Activated B cell treated with CpG ODN at 0.5 μM for 24 hours (primary cell): ENCODE measurements at regions of chr2 and their contacts with region 1.

Region 1: DNA sequence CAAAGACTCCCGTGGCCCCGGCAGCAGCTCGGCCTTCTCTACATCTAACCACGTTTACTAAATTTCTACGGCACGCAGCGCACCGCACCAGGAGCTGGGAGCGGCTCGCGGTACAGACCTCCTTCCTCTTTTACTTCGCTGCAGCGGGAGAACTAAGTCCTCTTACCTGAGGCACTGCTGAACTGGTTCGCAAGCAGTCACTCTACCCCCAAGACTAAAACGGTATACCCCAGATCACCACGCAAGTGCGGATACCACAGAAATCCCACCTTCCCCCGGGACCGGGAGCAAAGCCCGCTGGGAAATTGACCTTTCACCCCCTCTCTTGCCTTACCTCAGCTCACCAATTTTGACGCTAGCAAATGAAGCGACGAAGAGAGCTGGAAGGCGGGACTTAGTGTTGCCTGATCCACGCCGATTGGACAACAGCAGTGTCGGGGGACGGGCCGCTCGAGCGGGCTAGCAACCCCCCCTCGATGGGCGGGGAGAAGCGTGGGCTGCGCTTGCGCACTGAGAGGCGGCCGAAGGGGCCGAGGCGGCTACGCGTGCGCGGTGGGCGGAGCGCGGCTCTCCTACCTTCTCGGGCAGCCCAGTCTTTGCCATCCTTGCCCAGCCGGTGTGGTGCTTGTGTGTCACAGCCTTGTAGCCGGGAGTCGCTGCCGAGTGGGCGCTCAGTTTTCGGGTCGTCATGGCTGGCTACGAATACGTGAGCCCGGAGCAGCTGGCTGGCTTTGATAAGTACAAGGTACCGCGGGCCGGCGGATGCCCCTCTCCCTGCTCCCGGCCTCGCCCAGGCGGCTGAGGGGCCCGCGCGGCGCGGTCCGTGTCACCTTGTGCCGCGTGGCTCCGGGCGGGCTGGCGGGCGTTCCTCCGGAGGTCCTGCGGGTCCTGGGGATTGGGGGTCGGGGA is at the start of gene SELENOI:
- DNase-seq: peak; percentile 99
- ATAC-seq: peak; percentile 96
- H3K4me3 Mint-ChIP-seq: peak within 1 kb of the TSS; percentile 95
- H3K27ac Mint-ChIP-seq: peak within 1 kb of the TSS; percentile 95
- H3K4me1 Mint-ChIP-seq: peaks cover 42% of the 10 kb centered on the region
- H3K27me3 Mint-ChIP-seq: no peaks in the 10 kb centered on the region
- CTCF ChIP-seq: no peak
- total RNA-seq, gene SELENOI: 20.2 and 21.1 TPM in 2 replicates

Region 2: DNA sequence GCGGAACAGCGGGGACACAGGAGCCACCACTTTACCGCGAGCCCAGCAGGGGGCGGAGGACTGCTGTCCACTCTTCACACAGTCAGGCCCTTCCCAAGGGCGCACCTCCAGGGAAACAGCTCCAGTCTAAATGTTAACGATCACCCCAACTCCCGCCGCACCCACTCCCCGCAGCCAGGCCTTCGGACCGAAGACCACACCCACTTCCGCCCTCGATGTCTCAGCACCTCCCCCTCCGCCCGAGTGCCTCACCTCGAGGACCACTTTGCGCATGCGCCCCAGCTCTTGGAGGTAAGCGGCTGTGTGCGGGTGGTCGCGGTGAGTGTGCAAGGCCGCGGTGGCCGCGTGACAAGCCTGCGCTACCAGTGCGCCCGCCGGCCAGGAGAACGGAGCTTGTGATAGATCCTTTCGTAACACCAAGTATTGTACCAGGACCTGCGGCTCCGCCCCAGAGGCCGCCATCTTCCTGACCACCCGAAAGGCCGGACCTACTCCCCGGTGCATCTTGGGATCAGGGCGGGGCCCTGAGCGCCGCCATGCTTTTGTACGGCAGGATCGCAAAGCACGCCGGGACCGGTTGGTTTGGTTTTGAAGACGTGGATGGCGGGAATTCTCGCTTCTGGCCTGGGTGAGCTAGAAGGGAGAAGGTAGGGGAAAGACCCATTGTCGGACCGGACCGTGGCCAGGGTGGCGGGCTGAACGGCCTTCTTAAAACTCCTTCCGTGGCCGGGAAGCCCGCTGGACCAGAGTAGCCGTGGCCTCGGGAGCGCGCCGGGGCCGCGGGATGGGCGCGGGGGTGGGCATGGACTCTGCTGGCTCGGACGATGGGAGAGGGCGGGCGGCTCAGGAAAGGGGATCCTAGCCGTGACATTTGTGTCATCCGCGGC is 1552.7 kb before region 1 on chr2 and contains the starts of genes CENPO and PTRHD1:
- CTCF ChIA-PET with region 1: no interaction called
- POLR2A ChIA-PET with region 1: no interaction called
- intact Hi-C with region 1: loop called (anchors 5 kb)
- DNase-seq: peak; percentile 94
- ATAC-seq: peak; percentile 98
- H3K4me3 Mint-ChIP-seq: peak within 1 kb of the TSS; percentile 98
- H3K27ac Mint-ChIP-seq: peak within 1 kb of the TSS; percentile 100
- H3K4me1 Mint-ChIP-seq: peaks cover 18% of the 10 kb centered on the region
- H3K27me3 Mint-ChIP-seq: no peaks in the 10 kb centered on the region
- CTCF ChIP-seq: no peak
- total RNA-seq, gene CENPO: 11.2 and 13.4 TPM in 2 replicates
- total RNA-seq, gene PTRHD1: 39.6 and 41.1 TPM in 2 replicates

Region 3: DNA sequence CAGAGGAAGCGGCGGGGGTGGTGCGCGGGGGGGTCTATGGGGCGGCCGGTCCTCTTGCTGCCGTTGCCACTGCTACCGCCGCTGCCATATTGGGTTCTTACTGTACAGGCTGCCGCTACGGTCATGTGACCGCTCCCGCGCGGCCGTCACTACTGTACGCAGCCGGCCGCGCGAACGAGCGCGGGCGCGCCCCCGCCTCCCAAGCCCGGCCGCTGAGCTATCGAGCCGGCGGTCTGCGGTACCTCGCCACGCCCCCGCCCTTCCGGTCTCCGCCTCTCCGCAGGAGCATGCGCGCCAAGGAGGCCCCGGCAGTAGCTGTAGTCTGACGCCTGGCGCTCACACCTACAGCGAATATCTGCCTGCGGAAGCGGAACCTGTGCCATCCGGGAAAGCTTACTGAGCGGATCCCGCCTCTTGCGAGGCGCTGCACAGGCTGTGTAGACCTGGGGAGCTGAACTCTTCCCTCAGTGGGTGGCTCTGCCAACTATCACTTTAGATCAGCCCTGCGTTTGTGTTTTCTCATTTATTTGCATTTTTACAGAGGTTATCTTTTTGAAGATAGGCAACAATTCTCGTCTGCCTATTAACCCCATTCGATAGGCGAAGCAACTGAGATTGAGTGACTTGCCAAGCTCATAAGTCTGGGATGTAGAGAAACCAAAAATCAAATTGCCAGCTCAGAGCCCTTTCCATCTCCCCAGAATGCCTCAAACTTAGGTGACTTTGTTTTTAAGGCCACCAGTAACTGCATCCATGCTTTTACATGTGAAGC is 467.3 kb before region 1 on chr2 and contains the start of gene ASXL2:
- CTCF ChIA-PET with region 1: no interaction called
- POLR2A ChIA-PET with region 1: interaction called, 6 read pairs
- intact Hi-C with region 1: loop called (anchors 1 kb)
- DNase-seq: peak; percentile 98
- ATAC-seq: peak; percentile 88
- H3K4me3 Mint-ChIP-seq: peak within 1 kb of the TSS; percentile 98
- H3K27ac Mint-ChIP-seq: peak within 1 kb of the TSS; percentile 100
- H3K4me1 Mint-ChIP-seq: peaks cover 24% of the 10 kb centered on the region
- H3K27me3 Mint-ChIP-seq: peaks cover 2% of the 10 kb centered on the region
- CTCF ChIP-seq: no peak
- total RNA-seq, gene ASXL2: 38.4 and 41.9 TPM in 2 replicates

Region 4: DNA sequence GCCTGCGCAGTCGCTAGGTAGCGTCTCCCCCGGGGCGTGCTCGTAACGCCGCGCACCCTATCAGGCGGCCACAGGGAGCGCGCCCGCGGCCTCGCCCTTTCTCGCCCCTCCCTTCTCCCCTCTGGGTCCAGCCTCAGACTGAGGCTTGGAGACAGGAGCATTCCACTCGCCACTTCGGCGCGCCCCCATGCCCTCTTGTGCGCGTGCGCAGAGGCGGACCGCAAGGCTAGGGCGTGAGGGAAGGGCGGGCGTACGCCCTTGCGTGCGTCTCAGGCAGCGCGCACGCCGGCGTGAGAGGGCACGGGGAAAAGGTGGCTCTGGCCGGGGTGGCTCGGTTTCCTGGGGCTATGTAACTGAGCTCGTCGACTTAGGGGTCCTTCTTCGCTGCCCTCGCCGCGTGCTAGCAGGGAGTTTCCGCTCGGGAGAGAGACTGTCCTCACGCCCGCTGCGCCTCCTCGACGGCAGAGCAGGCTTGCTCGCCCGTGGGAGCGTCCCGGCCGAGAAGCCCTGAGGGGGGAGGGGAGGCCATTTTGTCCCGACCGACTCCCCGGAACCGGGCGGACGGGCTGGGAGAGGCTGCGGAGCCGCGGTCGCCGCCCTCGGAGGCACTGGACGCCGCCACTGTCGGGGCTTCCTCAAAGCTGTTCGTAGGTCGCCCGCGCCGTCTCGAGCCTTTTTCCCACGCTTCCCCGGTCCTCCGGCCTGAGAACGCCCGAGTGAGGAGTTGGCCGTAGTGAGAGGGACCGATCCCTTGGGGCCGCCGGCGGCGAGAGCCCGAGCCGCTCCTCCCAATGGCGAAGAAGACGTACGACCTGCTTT is 311.8 kb before region 1 on chr2 and contains the start of gene RAB10:
- CTCF ChIA-PET with region 1: no interaction called
- POLR2A ChIA-PET with region 1: interaction called, 5 read pairs
- intact Hi-C with region 1: loop called (anchors 1 kb)
- DNase-seq: peak; percentile 99
- ATAC-seq: peak; percentile 94
- H3K4me3 Mint-ChIP-seq: peak within 1 kb of the TSS; percentile 90
- H3K27ac Mint-ChIP-seq: peak within 1 kb of the TSS; percentile 92
- H3K4me1 Mint-ChIP-seq: peaks cover 39% of the 10 kb centered on the region
- H3K27me3 Mint-ChIP-seq: no peaks in the 10 kb centered on the region
- CTCF ChIP-seq: no peak
- total RNA-seq, gene RAB10: 79.3 and 94.6 TPM in 2 replicates

Region 5: DNA sequence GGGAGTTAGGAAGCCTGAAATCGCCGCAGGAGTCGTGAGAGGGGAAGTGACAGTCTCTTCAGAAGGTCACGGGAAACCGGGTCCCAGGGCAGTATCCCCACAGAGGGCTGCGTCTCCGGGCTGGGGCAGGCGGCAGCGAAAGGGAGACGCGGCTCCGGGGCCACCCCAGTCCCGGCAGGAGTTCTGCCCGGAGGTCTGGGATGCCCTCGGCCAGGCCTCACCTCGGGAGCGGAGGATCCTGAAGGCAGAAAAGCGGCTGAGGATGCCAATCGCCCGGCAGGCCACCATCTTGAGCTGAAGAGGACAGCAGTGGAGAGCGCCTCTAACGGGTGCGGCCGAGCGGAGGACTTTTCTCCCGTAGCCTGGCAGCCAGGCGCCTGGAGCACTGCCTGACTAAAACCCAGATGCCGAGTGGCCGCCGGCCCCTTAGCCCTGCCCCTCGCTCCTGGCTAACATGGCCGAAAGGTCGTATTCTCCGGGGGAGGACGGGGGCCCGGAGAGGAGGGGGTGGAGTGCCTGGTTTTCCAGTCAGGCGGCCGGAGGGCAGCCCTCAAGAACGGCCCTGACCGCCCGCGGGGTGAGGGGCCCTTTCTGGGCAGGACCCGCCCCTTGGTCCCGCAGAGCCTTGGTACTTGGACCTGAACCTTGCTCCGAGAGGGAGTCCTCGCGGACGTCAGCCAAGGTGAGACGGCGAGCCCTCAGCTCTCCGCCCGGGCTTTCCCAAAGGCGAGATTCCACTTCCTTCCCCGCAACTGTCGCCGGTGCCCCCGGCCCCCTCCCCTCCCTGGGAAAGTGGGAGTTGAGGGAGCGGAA is 101.3 kb before region 1 on chr2 and contains the starts of genes HADHA and HADHB:
- CTCF ChIA-PET with region 1: no interaction called
- POLR2A ChIA-PET with region 1: interaction called, 25 read pairs
- intact Hi-C with region 1: loop called (anchors 1 kb)
- DNase-seq: peak; percentile 88
- ATAC-seq: peak; percentile 84
- H3K4me3 Mint-ChIP-seq: peak within 1 kb of the TSS; percentile 97
- H3K27ac Mint-ChIP-seq: peak within 1 kb of the TSS; percentile 100
- H3K4me1 Mint-ChIP-seq: peaks cover 72% of the 10 kb centered on the region
- H3K27me3 Mint-ChIP-seq: no peaks in the 10 kb centered on the region
- CTCF ChIP-seq: no peak
- total RNA-seq, gene HADHA: 127 and 128 TPM in 2 replicates
- total RNA-seq, gene HADHB: 62.4 and 65.6 TPM in 2 replicates

Region 6: DNA sequence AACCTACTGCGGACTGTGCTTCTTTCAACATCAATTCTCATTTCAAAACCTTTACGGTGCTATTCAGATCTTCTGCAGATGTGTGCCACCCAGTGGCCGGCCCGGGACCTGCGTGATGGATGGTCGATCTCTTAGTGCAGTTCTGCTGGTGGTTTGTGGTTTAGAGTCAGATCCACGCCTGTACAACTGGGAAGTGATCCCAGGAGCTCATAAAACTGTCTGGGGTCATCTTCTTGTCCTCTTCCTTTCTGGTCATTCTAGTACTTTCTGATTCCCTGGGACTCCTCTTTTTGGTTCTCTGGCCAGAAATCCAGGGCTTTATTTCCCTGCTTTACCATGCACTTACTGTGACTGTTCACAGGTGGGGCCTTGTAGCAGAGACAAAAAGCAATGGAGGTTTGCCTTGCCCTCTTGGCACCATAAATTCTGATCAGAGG is 15.7 kb before region 1 on chr2:
- CTCF ChIA-PET with region 1: interaction called, 6 read pairs
- POLR2A ChIA-PET with region 1: no interaction called
- intact Hi-C with region 1: loop called (anchors 1 kb)
- DNase-seq: peak; percentile 66
- ATAC-seq: peak; percentile 99
- H3K4me3 Mint-ChIP-seq: no peak overlapping the region
- H3K27ac Mint-ChIP-seq: no peak overlapping the region
- H3K4me1 Mint-ChIP-seq: peaks cover 6% of the 10 kb centered on the region
- H3K27me3 Mint-ChIP-seq: no peaks in the 10 kb centered on the region
- CTCF ChIP-seq: peak; percentile 81

Region 7: GRCh38 chr2:26401739-26402541 is 56.1 kb after region 1 on chr2 and contains the start of gene DRC1:
- CTCF ChIA-PET with region 1: no interaction called
- POLR2A ChIA-PET with region 1: no interaction called
- intact Hi-C with region 1: no loop called
- DNase-seq: no peak
- ATAC-seq: no peak
- H3K4me3 Mint-ChIP-seq: no peak within 1 kb of the TSS
- H3K27ac Mint-ChIP-seq: no peak within 1 kb of the TSS
- H3K4me1 Mint-ChIP-seq: no peaks in the 10 kb centered on the region
- H3K27me3 Mint-ChIP-seq: peaks cover 8% of the 10 kb centered on the region
- CTCF ChIP-seq: no peak
- total RNA-seq, gene DRC1: not detected in 2 replicates

Region 8: DNA sequence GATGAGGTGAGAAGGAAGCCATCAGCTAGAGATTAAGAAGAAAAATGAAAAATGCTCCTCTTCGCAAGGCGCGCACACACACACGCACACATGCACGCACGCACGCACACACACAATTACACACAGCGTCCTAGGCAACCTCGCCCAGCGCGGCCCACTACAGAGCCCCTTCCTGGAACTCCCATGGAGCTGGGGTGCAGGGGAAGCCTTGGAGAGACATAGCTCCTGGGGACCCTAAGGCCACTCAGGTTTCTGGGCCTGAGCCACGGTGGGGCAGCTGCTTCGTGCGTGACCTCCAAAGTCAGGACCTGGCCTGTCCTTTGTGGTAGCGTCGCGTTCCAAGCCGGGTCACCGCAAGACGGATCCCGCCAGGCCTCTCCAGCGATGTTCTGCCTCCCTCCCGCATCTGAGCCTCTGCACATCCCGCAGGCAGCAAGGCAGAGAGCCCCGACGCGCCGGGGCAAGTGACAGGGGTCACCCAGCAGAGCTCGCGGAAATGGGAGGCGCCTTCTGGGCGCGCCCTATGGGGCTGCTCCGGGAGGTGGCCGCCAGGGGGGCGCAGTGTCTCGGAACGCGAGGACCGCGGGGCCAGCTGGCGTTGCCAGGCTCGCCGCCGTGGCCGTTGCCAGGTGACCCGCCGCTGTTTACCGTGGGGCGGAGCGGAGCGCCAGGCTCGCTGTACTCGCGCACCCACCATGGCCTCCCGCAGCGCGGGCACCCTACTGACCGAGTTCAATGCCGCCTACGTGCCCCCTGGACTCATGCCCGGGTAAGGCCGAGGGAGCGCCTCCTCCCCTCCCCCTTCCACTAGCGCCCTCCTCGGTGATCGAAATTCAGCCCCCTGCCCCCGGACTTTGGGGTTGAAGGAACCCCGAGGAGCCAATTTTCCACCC is 216.4 kb after region 1 on chr2:
- CTCF ChIA-PET with region 1: no interaction called
- POLR2A ChIA-PET with region 1: no interaction called
- intact Hi-C with region 1: no loop called
- DNase-seq: no peak
- ATAC-seq: no peak
- H3K4me3 Mint-ChIP-seq: no peak overlapping the region
- H3K27ac Mint-ChIP-seq: no peak overlapping the region
- H3K4me1 Mint-ChIP-seq: peaks cover 6% of the 10 kb centered on the region
- H3K27me3 Mint-ChIP-seq: peaks cover 70% of the 10 kb centered on the region
- CTCF ChIP-seq: no peak

Region 9: DNA sequence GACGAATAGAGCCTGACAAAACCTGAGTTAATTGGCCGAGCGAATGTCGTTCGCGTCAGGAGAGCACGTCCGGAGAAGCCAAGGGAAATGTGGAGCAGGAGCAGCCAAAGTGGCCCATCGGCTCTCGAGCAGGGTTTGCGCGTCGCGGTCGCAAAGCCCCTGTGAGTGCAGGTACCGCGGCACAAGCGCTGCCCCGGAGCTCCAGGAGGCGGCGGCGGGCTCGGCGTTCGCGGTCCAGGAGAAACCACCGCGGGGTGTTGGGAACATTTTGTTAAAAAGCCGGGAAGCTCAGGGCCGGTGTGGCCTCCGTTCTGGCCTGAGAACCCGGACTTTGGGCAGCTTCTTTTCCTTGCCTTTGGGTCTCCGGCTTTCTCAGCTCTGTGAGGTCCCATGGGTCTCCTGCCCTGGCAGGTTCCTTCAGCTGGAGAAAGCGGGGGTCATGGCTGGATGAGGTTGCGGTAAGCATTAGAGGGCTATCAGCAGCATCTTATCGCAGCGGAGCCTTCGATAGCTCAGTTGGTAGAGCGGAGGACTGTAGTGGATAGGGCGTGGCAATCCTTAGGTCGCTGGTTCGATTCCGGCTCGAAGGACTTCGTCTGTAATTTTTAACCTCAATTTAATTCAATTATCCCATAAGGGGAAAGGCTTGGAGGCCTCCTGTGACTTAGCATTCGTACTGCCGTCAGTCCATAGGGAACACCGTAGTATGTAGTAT is 704.6 kb after region 1 on chr2:
- CTCF ChIA-PET with region 1: no interaction called
- POLR2A ChIA-PET with region 1: no interaction called
- intact Hi-C with region 1: loop called (anchors 5 kb)
- DNase-seq: peak; percentile 91
- ATAC-seq: peak; percentile 60
- H3K4me3 Mint-ChIP-seq: peak overlapping the region; percentile 97
- H3K27ac Mint-ChIP-seq: peak overlapping the region; percentile 100
- H3K4me1 Mint-ChIP-seq: peaks cover 19% of the 10 kb centered on the region
- H3K27me3 Mint-ChIP-seq: peaks cover 6% of the 10 kb centered on the region
- CTCF ChIP-seq: no peak